ENCODE measurements at regions of chrX and their contacts with region 1.

Region 1: DNA sequence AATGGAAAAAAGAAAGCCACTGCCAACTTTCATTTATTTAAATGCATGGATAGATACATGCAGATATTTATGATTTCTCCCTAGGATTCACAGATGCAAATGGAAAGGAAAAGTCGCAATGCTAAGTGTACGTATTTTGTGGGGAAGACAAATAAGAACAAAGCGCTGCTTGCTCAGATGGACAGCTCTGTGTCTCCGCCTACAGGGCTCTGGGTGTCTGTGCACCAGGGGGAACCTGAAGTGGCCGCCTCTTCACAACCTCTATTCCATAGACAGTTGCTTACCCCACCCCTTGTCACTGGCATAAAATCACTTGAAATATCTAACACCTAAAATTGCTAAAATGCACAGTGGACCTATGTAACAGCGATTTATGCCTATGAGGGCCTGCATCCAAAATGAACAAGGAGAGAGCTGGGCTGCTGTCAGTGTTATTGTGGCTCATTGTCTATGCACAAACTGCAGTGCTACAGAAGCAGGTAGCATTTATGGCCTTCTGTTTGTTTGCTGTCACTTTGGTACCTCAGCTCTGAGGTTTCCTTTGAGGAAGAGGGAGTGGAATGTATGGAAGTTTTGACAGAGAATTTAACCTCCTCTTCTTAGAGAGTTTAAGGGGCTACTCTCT is 58.6 kb upstream of the PAGE1 start:
- DNase-seq: peak; percentile 24
- ATAC-seq: peak; percentile 74
- H3K4me3 ChIP-seq: no peak overlapping the region
- H3K27ac ChIP-seq: no peak overlapping the region
- H3K4me1 ChIP-seq: peaks cover 11% of the 10 kb centered on the region
- H3K27me3 ChIP-seq: no peaks in the 10 kb centered on the region
- CTCF ChIP-seq: peak; percentile 69
- EP300 ChIP-seq: no peak
- POLR2A ChIP-seq: no peak
- RAD21 ChIP-seq: peak; percentile 25; the same call in 1 of the 2 replicates

Region 2: GRCh38 chrX:49291615-49292337 is 462.6 kb before region 1 on chrX:
- CTCF ChIA-PET with region 1: interaction called, 3 read pairs
- POLR2A ChIA-PET with region 1: no interaction called
- in situ Hi-C with region 1: loop called (anchors 10 kb)
- intact Hi-C with region 1: loop called (anchors 1 kb)
- DNase-seq: peak; percentile 12
- ATAC-seq: peak; percentile 81
- H3K4me3 ChIP-seq: no peak overlapping the region
- H3K27ac ChIP-seq: no peak overlapping the region
- H3K4me1 ChIP-seq: no peaks in the 10 kb centered on the region
- H3K27me3 ChIP-seq: no peaks in the 10 kb centered on the region
- CTCF ChIP-seq: peak; percentile 74
- EP300 ChIP-seq: no peak
- POLR2A ChIP-seq: no peak
- RAD21 ChIP-seq: no peak

Region 3: DNA sequence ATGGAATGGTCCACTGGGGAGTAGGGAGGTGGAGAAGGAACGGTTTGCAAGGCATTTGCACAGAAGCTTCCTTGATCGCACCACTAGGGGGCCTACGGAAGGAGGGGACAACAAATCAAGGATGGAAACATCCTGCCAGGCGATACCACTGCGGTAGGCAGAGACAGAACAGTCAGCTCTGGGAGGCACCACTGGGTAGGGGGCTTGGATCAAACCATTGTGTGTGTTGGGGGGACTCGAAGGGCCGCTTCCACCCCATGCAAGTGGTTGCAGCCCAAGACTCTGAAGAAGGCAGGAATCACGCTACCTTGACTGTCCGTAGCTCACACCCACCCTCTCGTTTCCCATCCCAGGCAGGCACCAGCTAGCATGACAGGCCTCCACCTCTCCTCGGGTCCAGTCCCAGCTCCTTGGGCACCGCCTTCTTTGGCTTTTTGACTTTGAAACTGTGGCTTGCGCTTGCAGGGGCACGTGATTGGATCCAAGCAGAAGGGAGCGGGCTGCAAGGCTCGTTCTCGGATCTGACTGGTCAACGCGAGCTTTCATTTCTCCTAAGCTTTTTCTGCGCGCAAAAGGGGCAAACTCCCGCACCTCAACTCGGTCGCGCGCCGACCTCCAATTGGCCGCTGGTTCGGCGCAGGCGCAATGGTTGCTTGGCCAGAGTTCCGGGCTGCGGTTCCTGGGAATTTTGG is 127.1 kb before region 1 on chrX:
- CTCF ChIA-PET with region 1: no interaction called
- POLR2A ChIA-PET with region 1: no interaction called
- in situ Hi-C with region 1: no loop called
- intact Hi-C with region 1: loop called (anchors 1 kb)
- DNase-seq: peak; percentile 6
- ATAC-seq: peak; percentile 56; the same call in 2 of the 3 replicates
- H3K4me3 ChIP-seq: no peak overlapping the region
- H3K27ac ChIP-seq: no peak overlapping the region
- H3K4me1 ChIP-seq: no peaks in the 10 kb centered on the region
- H3K27me3 ChIP-seq: no peaks in the 10 kb centered on the region
- CTCF ChIP-seq: peak; percentile 49
- EP300 ChIP-seq: no peak
- POLR2A ChIP-seq: no peak
- RAD21 ChIP-seq: no peak

Region 4: GRCh38 chrX:49816435-49816834 is 62.1 kb after region 1 on chrX:
- CTCF ChIA-PET with region 1: no interaction called
- POLR2A ChIA-PET with region 1: no interaction called
- in situ Hi-C with region 1: no loop called
- intact Hi-C with region 1: no loop called
- DNase-seq: peak; percentile 66
- ATAC-seq: peak; percentile 63
- H3K4me3 ChIP-seq: no peak overlapping the region; a peak in 1 of 6 replicates
- H3K27ac ChIP-seq: peak overlapping the region; percentile 72
- H3K4me1 ChIP-seq: peaks cover 50% of the 10 kb centered on the region
- H3K27me3 ChIP-seq: no peaks in the 10 kb centered on the region
- CTCF ChIP-seq: no peak
- EP300 ChIP-seq: peak in 1 of 2 experiments; percentile 73; a peak in 2 of 4 replicates
- POLR2A ChIP-seq: no peak
- RAD21 ChIP-seq: no peak

Region 5: GRCh38 chrX:49878834-49879659 is 124.7 kb after region 1 on chrX and contains the start of gene USP27X:
- CTCF ChIA-PET with region 1: no interaction called
- POLR2A ChIA-PET with region 1: no interaction called
- in situ Hi-C with region 1: no loop called
- intact Hi-C with region 1: no loop called
- DNase-seq: peak; percentile 86
- ATAC-seq: peak; percentile 72
- H3K4me3 ChIP-seq: peak within 1 kb of the TSS; percentile 52 to 76 (median 71)
- H3K27ac ChIP-seq: peak within 1 kb of the TSS; percentile 97
- H3K4me1 ChIP-seq: peaks cover 64% of the 10 kb centered on the region
- H3K27me3 ChIP-seq: no peaks in the 10 kb centered on the region; a peak in 1 of 5 replicates
- CTCF ChIP-seq: peak; percentile 60
- EP300 ChIP-seq: no peak
- POLR2A ChIP-seq: peak in 1 of 2 experiments; percentile 60; a peak in 1 of 4 replicates
- RAD21 ChIP-seq: peak; percentile 18; the same call in 1 of the 2 replicates
- total RNA-seq, gene USP27X: 7.2 and 7.5 TPM in 2 replicates

Measured in HepG2 (cell line).